Left ventricle myocardium superior (tissue), 1 donor: ENCODE measurements at regions of chrX and their contacts with region 1.

Region 1: GRCh38 chrX:132219343-132219768 is at the start of gene RAP2C:
- DNase-seq: peak; percentile 81
- ATAC-seq: peak; percentile 88
- total RNA-seq, gene RAP2C: 15.0 TPM

Region 2: GRCh38 chrX:131830400-131831184 is 388.8 kb before region 1 on chrX:
- intact Hi-C with region 1: loop called (anchors 10 kb)
- DNase-seq: peak; percentile 47
- ATAC-seq: peak; percentile 96

Region 3: GRCh38 chrX:131944936-131945902 is 274.1 kb before region 1 on chrX:
- intact Hi-C with region 1: no loop called
- DNase-seq: no peak
- ATAC-seq: no peak

Region 4: DNA sequence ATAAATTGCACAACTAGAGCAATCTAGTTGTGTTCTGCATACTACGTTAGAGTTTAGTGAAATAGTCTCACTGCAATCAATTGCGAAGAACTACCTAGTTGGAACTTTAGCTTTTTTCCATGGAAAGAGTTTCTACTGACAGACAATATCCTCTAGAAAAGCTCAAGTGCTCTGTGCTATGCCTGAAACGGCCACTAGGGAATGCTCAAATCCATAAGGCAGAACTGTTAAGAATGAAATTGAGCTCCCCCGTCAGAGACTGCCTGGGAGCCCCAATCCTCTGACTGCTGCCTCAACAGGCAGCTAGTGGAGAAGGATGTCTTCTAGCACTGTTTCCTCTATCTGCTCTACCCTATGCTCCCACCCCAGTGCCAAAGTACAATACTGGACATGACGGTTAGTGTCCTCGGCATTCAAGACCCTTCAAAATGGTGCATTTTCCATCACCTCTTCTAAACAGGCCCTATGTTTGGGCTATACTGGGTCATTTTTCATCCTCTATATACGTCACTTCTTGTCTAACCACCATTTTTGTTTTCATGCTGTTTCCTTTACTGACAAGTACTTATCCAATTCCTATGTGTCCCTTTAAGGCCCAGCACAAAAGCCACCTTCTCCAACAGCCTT is 126.8 kb before region 1 on chrX:
- intact Hi-C with region 1: loop called (anchors 5 kb)
- DNase-seq: peak; percentile 21
- ATAC-seq: peak; percentile 65

Region 5: DNA sequence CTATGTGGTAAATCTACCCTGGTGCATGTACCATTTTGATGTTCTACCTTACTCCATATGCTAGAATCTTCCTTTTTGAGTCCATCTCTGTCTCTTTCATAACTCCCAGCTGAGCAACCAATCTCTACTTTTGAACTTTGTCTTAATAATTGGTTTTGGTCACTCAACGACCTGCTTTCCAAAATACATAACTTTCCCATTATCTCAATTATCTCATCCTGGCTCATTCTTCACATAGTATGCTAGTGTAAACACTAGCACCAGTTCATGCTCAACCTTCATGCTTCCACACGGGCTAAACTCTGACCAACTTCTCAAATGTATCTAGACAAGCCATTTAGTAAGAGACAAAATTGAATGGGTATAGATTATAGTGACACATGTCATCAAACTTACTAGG is 80.2 kb after region 1 on chrX:
- intact Hi-C with region 1: no loop called
- DNase-seq: no peak
- ATAC-seq: no peak